ENCODE measurements at regions of chr19 and their contacts with region 1.

Region 1: DNA sequence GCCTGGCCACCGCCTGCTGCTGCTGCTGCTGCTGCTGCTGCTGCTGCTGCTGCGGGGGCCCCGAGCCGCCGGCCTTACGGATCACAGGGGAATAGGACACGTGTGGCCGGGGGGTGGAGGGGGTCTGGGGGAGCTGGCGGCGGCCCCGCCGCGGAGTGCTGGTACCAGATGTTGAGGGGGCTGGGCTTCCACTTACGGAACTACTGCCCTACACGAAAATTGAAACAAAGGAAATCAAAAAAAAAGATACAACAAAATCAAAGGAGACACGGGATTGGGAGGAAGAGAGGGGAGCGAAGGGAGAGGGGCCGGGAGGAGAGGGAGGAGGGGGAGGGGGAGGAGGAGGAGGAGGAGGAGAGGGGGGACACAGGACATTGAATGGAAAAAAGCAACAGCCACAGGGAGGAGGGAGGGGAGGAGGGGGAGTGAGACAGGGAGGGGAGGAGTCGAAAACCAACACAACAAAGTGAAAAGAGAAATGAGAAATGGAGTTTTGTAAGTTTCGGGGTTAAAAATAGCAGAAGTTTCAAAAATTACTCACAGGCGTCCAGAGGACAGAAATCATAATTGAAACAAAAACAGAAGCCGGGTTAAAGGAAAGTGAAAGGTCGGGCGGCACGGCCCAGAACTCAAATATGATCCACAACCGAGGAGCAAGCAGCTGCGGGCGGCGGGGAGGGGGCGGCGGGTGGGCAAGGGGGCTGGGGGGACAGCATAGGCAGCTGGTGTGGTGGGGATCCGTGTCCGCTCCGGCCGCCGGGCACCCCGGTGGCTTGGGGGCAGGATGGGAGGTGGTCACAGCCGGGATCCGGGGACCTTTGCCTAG is 57.8 kb downstream of the IER2 start:
- H3K4me3 Mint-ChIP-seq: peak overlapping the region; percentile 74
- H3K27ac Mint-ChIP-seq: peak overlapping the region; percentile 78
- H3K4me1 Mint-ChIP-seq: peaks cover 26% of the 10 kb centered on the region
- H3K27me3 Mint-ChIP-seq: peaks cover 23% of the 10 kb centered on the region

Region 2: GRCh38 chr19:12974301-12975220 is 233.5 kb before region 1 on chr19:
- intact Hi-C with region 1: no loop called
- H3K4me3 Mint-ChIP-seq: no peak overlapping the region
- H3K27ac Mint-ChIP-seq: no peak overlapping the region
- H3K4me1 Mint-ChIP-seq: peaks cover 7% of the 10 kb centered on the region
- H3K27me3 Mint-ChIP-seq: peaks cover 9% of the 10 kb centered on the region

Region 3: DNA sequence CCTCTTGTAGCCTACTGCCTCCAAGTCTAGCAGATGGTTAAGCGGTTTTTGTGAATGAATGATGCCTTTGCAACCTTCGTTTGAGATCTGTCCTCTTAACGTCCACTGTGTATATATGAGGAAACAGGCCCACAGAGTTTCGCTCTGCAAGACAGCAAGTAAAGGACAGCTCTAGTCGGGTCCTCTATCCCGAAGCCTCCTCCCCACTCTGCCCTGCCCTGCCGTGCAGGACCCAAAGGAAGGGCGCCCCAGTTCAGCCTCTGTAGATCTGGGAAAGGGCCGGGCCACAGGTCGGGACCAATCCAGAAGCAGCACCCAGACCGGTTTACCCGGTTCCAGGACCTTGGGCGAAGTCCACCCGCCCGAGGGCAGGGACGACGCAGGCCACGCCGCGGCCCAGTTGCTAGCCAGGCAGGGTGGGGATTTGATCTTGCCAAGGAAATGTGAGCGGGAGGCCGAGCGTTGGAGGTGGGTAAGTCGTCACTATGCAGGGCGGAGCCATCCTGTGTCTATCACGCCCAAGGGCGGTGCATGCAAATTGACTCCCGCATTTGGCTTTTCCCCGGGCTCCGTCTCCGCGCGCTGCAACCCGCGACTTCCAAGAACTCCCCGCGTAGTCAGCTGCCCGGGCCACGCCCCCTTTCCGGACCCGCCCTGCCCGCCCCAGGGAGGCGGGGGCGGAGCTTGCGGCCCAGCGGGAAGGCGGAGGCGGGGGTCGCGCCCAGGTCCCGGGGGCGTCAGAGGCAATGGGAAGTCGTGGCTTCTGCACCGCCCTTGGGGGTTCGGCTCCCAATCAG is 45.3 kb before region 1 on chr19:
- intact Hi-C with region 1: loop called (anchors 5 kb)
- H3K4me3 Mint-ChIP-seq: peak overlapping the region; percentile 63
- H3K27ac Mint-ChIP-seq: peak overlapping the region; percentile 88
- H3K4me1 Mint-ChIP-seq: peaks cover 50% of the 10 kb centered on the region
- H3K27me3 Mint-ChIP-seq: no peaks in the 10 kb centered on the region